Panc1 (cell line): ENCODE measurements at regions of chr15 and their contacts with region 1.

Region 1: DNA sequence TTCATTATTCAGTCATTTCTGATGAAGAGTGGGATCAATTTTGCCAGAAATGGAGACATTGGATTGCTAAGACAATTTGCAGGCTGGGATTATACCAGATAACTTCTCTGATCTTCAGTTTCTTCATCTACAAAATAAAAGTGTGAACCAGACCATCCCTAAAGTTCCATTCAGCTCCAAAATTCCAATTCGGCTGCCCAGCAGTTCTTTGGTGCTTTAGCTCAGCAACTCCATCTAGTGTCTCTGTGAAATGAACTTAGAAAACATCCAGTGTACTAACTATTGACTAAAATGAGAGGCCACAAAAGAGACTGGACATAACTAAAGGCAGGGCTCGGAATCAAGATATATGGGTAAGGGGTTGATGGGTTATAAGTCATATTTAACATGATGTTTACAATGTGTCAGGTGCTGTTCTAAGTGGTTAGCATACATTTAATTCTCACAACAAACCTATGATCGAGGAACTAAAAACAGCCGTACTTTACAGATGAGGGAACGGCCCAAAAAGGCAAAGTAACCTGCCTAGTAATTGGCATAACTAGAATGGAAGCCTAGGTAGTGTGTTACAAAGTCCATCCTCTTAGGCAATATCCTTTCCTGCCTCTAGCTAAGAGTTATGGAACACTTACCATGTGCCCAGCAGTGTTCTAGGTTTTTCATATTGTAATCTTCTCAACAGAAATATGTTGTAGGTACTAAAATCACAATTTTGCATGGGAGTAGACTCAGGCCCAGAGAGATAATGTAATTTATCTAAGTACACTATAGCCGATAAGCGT is 17.0 kb downstream of the THAP10 start:
- DNase-seq: no peak
- ATAC-seq: peak; percentile 85
- H3K4me3 ChIP-seq: no peak overlapping the region
- H3K27ac ChIP-seq: peak overlapping the region; percentile 62
- H3K4me1 ChIP-seq: peaks cover 10% of the 10 kb centered on the region; the same call in 1 of the 2 replicates
- H3K27me3 ChIP-seq: no peaks in the 10 kb centered on the region
- CTCF ChIP-seq: peak; percentile 80

Region 2: DNA sequence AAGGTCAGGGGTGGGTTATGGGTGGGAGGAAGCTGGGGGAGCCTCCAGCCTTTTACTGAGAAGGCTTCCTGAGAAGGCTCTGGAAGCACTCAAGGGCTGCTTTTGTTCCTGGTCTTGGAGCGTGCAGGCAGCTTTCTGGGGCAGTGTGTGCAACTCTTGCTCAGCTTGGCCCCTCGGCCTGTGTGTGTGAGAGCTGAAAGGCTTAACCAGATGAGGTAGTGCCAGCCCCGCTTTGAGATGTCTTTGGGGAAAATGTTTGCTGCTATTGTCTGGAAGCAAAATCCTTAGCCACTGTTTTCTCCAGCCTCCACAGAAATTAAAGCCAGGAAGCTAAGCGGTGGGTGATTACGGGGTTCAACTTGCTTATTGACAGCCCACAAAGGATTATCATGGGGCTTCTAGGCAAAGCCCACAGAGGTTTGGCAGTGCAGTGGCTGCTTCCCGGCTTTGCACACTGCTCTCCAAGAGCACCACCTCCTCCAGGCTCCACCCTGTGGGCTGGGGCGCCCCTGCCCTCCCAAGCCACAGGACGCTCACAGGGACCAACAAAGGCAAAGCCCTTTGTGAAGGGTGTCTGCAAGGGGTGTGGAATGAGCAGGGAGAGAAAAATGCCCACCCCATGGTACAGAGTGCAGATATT is 655.8 kb before region 1 on chr15:
- CTCF ChIA-PET with region 1: no interaction called
- POLR2A ChIA-PET with region 1: no interaction called
- in situ Hi-C with region 1: no loop called
- intact Hi-C with region 1: no loop called
- DNase-seq: no peak
- ATAC-seq: no peak
- H3K4me3 ChIP-seq: no peak overlapping the region
- H3K27ac ChIP-seq: no peak overlapping the region
- H3K4me1 ChIP-seq: no peaks in the 10 kb centered on the region
- H3K27me3 ChIP-seq: no peaks in the 10 kb centered on the region
- CTCF ChIP-seq: no peak

Region 3: GRCh38 chr15:70741107-70741531 is 134.1 kb before region 1 on chr15:
- CTCF ChIA-PET with region 1: no interaction called
- POLR2A ChIA-PET with region 1: interaction called, 11 read pairs
- in situ Hi-C with region 1: no loop called
- intact Hi-C with region 1: no loop called
- DNase-seq: no peak
- ATAC-seq: peak; percentile 73
- H3K4me3 ChIP-seq: no peak overlapping the region
- H3K27ac ChIP-seq: peak overlapping the region; percentile 97
- H3K4me1 ChIP-seq: peaks cover 77% of the 10 kb centered on the region
- H3K27me3 ChIP-seq: no peaks in the 10 kb centered on the region
- CTCF ChIP-seq: no peak

Region 4: GRCh38 chr15:70806992-70807712 is 68.0 kb before region 1 on chr15:
- CTCF ChIA-PET with region 1: no interaction called
- POLR2A ChIA-PET with region 1: no interaction called
- in situ Hi-C with region 1: no loop called
- intact Hi-C with region 1: no loop called
- DNase-seq: no peak
- ATAC-seq: no peak
- H3K4me3 ChIP-seq: no peak overlapping the region
- H3K27ac ChIP-seq: peak overlapping the region; percentile 65
- H3K4me1 ChIP-seq: peaks cover 22% of the 10 kb centered on the region
- H3K27me3 ChIP-seq: no peaks in the 10 kb centered on the region
- CTCF ChIP-seq: no peak

Region 5: DNA sequence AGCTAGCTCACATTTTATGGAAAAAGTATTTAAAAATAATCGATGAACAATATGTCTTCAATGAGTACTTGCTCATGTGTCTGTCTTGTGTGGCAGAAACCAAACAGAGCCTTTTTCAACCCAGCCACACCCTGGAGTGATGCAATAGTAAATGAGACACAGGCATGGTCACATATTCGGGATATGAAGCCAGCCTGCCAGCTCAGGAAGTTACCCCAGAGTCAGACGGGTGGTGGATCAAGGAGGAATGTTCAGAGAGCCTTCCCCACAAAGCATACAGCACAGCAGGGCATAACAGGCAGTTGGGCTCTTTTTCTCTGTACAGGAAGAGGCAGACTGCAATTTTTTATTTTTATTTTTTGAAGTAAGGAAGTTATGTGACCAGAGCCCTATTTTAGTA is 48.6 kb before region 1 on chr15:
- CTCF ChIA-PET with region 1: interaction called, 12 read pairs
- POLR2A ChIA-PET with region 1: interaction called, 3 read pairs
- in situ Hi-C with region 1: no loop called
- intact Hi-C with region 1: loop called (anchors 2 kb)
- DNase-seq: peak; percentile 57
- ATAC-seq: peak; percentile 32; the same call in 1 of the 2 replicates
- H3K4me3 ChIP-seq: no peak overlapping the region
- H3K27ac ChIP-seq: peak overlapping the region; percentile 69
- H3K4me1 ChIP-seq: peaks cover 11% of the 10 kb centered on the region; the same call in 1 of the 2 replicates
- H3K27me3 ChIP-seq: no peaks in the 10 kb centered on the region
- CTCF ChIP-seq: no peak

Region 6: GRCh38 chr15:70853270-70853820 is 21.8 kb before region 1 on chr15:
- CTCF ChIA-PET with region 1: interaction called, 10 read pairs
- POLR2A ChIA-PET with region 1: no interaction called
- in situ Hi-C with region 1: no loop called
- intact Hi-C with region 1: no loop called
- DNase-seq: no peak
- ATAC-seq: peak; percentile 50
- H3K4me3 ChIP-seq: peak overlapping the region; percentile 86 to 93
- H3K27ac ChIP-seq: peak overlapping the region; percentile 90
- H3K4me1 ChIP-seq: peaks cover 28% of the 10 kb centered on the region
- H3K27me3 ChIP-seq: no peaks in the 10 kb centered on the region
- CTCF ChIP-seq: no peak